OCI-LY7 (cell line): ENCODE measurements at regions of chr5 and their contacts with region 1.

Region 1: DNA sequence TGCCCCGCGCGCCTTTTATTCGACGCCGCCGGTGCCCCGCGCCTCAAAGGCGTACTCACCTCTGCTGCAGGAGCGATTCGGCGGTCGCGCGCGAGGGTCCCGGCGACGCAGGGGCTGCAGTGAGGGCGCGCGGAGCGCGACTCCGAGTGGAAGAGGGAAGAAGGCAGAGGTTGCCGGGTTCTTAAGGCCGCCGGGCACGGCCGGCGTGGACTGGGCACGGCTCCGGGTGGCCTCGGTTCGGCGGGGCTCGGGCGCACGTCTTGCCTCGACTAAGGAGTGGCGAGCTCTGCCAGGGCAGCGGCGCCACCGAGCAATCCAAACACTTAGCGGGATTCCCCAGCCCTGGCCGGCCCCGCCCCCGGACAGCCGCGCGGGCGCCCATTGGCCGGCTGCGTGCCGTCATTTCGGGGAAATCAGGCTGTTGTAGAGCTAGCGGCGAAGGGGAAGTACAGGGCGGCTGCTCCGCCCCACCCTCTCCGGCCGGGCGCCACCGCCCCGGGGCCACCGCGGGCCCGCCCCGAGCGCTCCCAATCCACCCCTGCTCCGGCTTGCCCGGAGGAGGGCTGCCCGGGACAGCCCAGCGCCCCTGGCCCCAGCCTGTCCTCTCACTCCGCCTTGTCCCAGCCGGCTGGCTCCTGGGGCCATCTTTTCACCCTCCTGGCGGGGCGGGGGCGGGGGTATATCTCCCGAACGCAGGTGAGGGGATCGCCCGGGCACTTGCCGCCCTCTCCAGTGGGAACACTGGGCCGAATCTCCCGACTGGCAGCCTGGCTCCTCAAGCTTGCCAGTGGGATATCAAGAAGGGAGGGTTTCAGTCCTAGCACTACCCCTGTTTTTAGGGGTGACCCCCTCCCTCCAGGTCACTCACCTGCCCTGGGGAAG is at the start of gene IRF1:
- DNase-seq: peak; percentile 94
- H3K4me3 ChIP-seq: peak within 1 kb of the TSS; percentile 91
- H3K27ac ChIP-seq: peak within 1 kb of the TSS; percentile 76
- H3K4me1 ChIP-seq: peaks cover 59% of the 10 kb centered on the region
- CTCF ChIP-seq: 0 out of 2 replicates have a peak, but pooled peaks have one; percentile 23
- total RNA-seq, gene IRF1: 25.9 and 39.4 TPM in 2 replicates

Region 2: DNA sequence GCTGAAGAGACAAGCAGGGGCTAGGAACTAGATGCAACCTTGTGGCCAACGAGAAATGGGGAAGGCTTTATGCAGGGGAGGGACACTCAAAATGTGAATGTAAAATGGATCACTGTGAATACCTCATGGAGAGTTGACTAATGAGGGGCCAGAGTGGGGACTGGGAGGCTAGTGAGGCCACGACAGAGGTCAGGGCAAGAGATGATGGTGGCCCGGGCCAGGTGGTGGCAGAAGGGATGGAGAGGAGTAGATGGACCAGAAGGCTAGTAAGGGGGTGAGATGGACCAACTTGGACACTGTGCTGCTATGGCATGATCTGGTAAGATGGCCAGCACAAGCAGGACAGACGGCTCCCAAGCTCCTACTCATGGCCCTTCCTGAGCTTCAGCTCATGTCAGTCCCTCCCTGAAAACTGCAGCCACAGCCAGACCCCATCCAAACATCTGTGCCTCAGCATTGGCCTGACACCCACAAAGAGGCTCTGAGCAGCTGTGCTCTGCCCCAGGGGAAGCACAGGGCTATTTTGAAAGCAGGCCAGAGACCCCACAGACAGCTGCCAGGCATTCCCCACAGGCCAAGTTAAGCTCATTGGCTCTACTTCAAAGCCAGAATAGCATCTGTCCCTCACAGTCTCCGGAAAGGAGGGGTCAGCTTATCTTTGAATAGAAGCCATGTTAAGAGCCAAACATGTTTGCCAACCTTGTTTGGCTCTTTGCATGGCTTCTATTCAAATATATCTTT is 285.2 kb before region 1 on chr5:
- CTCF ChIA-PET with region 1: no interaction called
- POLR2A ChIA-PET with region 1: interaction called, 3 read pairs
- intact Hi-C with region 1: loop called (anchors 10 kb)
- DNase-seq: peak; percentile 94
- H3K4me3 ChIP-seq: peak overlapping the region; percentile 27
- H3K27ac ChIP-seq: peak overlapping the region; percentile 91
- H3K4me1 ChIP-seq: peaks cover 98% of the 10 kb centered on the region
- CTCF ChIP-seq: no peak

Region 3: GRCh38 chr5:132426525-132427138 is 64.1 kb before region 1 on chr5:
- CTCF ChIA-PET with region 1: interaction called, 5 read pairs
- POLR2A ChIA-PET with region 1: interaction called, 35 read pairs
- intact Hi-C with region 1: no loop called
- DNase-seq: peak; percentile 87
- H3K4me3 ChIP-seq: peak overlapping the region; percentile 37
- H3K27ac ChIP-seq: peak overlapping the region; percentile 96
- H3K4me1 ChIP-seq: peaks cover 100% of the 10 kb centered on the region
- CTCF ChIP-seq: peak; percentile 66

Region 4: DNA sequence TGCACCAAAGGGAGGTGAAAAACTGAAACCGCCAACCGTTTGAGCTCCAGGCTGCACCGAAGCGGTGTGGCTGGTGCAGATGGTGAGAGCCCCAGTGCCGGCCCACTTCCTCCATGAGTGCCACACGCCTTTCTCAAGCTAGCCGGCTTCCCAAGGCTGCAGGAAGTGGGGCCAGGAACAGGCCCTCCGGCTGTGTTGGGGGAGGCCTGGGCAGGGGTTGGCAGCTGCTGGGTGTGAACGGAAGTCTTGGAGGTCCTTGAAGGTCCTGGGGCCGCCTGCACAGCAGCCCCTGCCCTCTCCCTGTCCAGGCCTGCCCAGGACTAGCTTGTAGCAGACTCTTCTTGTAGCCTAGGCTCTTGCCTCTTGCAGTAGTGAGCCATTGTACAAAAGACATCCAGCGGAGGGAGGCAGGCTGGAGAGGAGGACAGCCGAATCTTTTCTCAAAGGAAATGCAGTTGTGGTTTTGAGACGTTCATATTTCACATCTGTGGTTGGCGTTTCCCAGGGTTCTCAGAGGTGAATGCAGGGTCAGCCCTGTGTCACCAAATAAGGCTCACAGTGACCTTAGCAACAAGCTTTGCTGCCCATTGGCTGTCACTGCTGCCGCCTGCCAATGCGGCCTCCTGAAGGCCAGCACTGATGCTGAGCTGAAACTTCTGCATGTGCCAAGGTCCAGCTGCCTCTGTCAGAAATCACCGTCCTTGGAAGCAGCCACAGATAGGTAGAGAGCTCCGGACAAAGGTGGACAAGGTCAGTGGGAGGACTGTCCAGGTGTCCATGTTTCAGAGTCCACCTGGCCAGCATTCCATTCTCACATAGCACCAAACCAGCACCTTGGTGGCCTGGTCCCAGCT is 24.1 kb before region 1 on chr5:
- CTCF ChIA-PET with region 1: interaction called, 5 read pairs
- POLR2A ChIA-PET with region 1: interaction called, 26 read pairs
- intact Hi-C with region 1: loop called (anchors 1 kb)
- DNase-seq: peak; percentile 84
- H3K4me3 ChIP-seq: peak overlapping the region; percentile 48
- H3K27ac ChIP-seq: peak overlapping the region; percentile 61
- H3K4me1 ChIP-seq: peaks cover 68% of the 10 kb centered on the region
- CTCF ChIP-seq: no peak

Region 5: DNA sequence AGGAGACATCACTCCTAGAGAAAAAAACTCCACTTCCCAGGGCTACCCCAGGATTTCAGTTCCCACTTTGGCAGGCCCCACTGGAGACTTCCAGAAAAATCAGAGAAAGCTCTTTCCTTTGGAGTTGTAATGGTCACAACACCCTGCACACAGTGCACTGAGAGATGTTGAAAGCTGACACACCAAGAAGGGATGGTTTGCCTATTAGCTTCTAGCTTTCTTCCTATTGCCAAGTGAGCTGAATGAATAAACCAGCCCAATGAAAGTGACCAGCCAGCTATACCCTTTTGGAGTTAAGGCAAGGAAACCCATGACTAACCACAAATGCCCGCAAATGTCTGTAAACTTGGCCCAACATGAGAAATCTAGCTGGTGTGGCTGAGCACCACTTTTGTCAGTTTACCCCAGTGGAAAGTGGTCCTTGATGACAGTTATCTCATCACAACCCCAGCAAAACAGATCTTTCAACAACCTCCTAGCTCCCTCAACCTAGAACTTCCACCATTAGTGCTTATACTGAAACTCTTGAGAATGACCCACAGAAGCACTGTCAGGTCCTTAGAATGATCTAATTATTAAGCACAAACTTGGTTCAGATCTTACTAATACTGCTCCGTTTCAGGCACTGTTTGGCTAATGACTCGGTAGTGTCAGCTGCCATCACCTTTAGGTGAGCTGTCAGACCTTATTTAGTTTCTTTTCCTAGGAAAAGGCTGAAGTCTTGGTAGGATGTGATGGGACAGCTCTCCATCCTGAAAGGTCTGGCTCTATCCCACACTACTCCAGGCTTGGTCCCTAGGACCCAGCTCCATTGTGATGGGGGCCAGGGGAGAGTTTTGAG is 11.4 kb before region 1 on chr5:
- CTCF ChIA-PET with region 1: interaction called, 6 read pairs
- POLR2A ChIA-PET with region 1: interaction called, 17 read pairs
- intact Hi-C with region 1: no loop called
- DNase-seq: no peak
- H3K4me3 ChIP-seq: no peak overlapping the region
- H3K27ac ChIP-seq: no peak overlapping the region
- H3K4me1 ChIP-seq: peaks cover 21% of the 10 kb centered on the region
- CTCF ChIP-seq: no peak

Region 6: GRCh38 chr5:132591145-132591544 is 100.4 kb after region 1 on chr5:
- CTCF ChIA-PET with region 1: no interaction called
- POLR2A ChIA-PET with region 1: no interaction called
- intact Hi-C with region 1: no loop called
- DNase-seq: no peak
- H3K4me3 ChIP-seq: no peak overlapping the region
- H3K27ac ChIP-seq: no peak overlapping the region
- H3K4me1 ChIP-seq: no peaks in the 10 kb centered on the region
- CTCF ChIP-seq: peak; percentile 32; the same call in 1 of the 2 replicates